GM13976 (cell line): ENCODE measurements at regions of chr15 and their contacts with region 1.

Region 1: DNA sequence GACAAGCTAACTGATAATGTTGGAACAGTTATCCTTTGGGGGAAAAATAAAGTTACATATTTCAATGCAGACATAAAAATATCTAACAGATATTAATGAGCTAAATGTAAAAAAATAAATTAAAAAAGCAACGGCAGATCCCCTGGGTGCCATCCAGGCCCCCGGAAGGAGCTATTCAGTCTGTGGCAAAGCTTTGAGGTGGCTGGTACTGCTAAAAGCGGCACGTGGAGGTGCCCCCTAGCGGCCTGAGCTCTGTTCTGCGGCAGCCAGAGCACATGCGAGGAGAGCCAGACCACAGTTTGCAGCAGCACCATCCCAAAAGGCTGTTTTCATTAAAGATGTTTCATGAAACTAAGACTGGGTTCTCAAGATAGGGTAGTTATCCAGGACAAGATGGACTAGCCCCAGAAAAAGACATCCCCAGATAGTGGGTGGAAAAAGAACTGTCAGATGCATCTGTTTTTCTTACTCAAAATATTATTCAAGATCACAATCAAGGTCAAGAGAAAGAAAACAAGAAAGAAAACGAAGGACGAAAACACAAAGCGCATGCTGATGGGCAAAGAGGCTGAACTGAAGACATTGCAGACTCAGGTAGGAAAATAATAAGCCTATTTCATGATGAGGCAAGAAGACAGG is 18.7 kb downstream of the AP3S2 start:
- DNase-seq: peak; percentile 84
- CTCF ChIP-seq: peak; percentile 94

Region 2: GRCh38 chr15:89760303-89761008 is 114.6 kb before region 1 on chr15:
- in situ Hi-C with region 1: loop called (anchors 5 kb)
- DNase-seq: peak; percentile 90
- CTCF ChIP-seq: peak; percentile 97

Region 3: GRCh38 chr15:90412356-90413194 is 537.5 kb after region 1 on chr15:
- in situ Hi-C with region 1: no loop called
- DNase-seq: no peak
- CTCF ChIP-seq: no peak